PC-9 (cell line): ENCODE measurements at regions of chr17 and their contacts with region 1.

Region 1: DNA sequence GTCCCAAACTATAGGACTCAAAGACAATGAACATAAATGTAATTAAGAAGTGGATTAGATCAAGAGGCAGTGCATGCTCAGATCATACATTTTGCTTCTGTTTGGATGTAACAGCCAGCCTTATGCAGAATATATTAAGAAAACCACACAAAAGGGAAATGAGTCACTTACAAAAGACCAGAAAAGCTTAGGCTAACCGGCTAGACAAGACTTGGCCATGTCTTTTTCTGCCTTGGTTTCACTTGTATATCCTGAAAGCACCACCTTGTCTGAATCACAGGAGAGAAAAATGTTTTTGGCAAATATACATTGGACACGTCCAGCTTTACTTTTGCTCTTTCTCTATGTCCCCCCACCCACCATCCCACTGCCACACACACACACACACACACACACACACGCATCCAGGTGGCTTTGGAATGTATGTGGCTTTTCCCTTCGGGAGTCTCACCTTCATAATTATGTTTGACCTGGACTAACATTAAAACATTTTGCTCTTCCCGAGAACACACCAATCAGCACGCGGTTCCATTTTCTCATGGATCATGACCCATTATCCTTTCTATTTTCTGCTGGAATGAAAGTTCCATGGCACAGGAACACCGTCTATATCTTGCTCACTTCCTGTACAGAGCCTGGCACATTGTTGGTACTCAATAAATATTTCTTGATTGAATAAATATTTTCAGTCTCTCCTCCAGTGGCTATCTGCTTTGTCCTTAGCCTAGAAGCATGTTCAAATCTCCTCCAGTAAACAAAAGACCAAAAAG is 64.6 kb downstream of the CDK5R1 start:
- DNase-seq: peak; percentile 35 to 91
- H3K4me3 ChIP-seq: peak overlapping the region; percentile 40; the same call in 1 of the 2 replicates
- H3K27ac ChIP-seq: peak overlapping the region; percentile 92
- H3K4me1 ChIP-seq: peaks cover 18% of the 10 kb centered on the region
- H3K27me3 ChIP-seq: no peaks in the 10 kb centered on the region
- CTCF ChIP-seq: no peak

Region 2: DNA sequence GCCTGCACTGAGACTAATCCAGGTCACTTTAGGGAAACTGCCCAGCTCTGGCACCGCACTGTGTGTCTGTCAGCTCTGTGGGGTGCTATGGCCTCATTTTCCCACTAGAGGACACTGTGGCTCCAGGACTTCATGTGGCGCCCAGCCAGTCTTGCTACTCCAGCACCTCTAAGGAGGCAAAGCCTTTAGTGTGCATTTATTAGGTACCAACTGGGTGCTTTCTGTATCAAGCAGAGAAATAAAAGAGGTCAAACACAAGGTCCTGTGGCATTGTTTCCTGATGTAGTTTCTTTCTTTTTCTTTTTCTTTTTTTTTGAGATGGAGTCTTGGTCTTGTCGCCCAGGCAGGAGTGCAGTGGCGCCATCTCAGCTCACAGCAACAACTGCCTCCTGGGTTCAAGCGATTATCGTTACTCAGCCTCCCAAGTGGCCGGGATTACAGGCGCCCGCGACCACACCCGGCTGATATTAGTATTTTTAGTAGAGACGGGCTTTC is 298.2 kb before region 1 on chr17:
- CTCF ChIA-PET with region 1: no interaction called
- POLR2A ChIA-PET with region 1: interaction called, 13 read pairs
- intact Hi-C with region 1: no loop called
- DNase-seq: peak; percentile 50 to 77
- H3K4me3 ChIP-seq: no peak overlapping the region
- H3K27ac ChIP-seq: no peak overlapping the region
- H3K4me1 ChIP-seq: no peaks in the 10 kb centered on the region
- H3K27me3 ChIP-seq: no peaks in the 10 kb centered on the region
- CTCF ChIP-seq: peak; percentile 95

Region 3: GRCh38 chr17:32503251-32504165 is 47.9 kb before region 1 on chr17:
- CTCF ChIA-PET with region 1: no interaction called
- POLR2A ChIA-PET with region 1: interaction called, 3 read pairs
- intact Hi-C with region 1: loop called (anchors 5 kb)
- DNase-seq: peak in 1 of 2 experiments; percentile 60
- H3K4me3 ChIP-seq: no peak overlapping the region
- H3K27ac ChIP-seq: no peak overlapping the region
- H3K4me1 ChIP-seq: peaks cover 11% of the 10 kb centered on the region; the same call in 1 of the 2 replicates
- H3K27me3 ChIP-seq: no peaks in the 10 kb centered on the region
- CTCF ChIP-seq: no peak

Region 4: DNA sequence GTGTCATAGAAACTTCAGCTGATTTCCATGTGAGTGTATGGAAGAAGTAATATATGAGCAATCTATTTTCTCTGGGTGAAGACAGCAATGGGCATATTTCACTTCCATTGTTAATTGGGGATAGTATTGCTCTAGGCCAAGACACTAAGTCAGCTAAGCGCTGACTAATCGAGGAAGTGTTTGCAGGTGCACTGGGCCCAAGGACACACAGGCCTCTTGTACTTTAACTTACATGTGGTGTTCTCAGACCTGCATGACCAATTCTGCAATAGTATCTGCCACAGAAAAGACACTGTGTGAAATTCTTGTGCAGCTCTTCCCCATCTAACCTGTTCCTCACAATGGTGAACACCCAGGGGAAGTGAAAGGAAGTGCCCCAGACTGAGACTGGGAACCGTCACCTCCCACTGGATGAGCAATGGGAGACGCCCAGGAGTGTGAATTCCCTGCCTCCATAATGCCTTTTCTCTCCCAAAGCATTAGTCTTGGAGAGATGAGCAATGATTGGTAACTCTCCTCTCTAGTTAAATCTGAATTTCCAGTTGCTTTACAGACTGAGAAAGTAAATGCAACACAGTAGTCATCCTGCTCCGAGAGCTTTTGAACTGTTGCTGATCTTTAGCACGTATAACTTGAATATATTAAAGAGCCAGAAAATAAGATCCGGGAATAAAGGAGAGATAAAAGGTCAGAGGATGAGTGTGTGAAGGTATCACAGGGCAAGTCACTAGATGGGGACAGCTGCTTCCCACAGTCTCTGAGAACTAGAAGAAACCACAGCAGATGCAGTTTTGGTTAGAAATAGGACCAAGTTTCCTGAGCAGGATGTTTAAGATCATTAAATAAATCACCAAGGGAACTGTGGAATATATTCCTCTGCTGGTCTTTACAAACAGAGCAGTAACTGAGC is 18.1 kb after region 1 on chr17:
- CTCF ChIA-PET with region 1: no interaction called
- POLR2A ChIA-PET with region 1: no interaction called
- intact Hi-C with region 1: loop called (anchors 2 kb)
- DNase-seq: peak; percentile 35 to 91
- H3K4me3 ChIP-seq: no peak overlapping the region
- H3K27ac ChIP-seq: peak overlapping the region; percentile 83
- H3K4me1 ChIP-seq: peaks cover 19% of the 10 kb centered on the region
- H3K27me3 ChIP-seq: no peaks in the 10 kb centered on the region
- CTCF ChIP-seq: no peak